IMR-90 (cell line): ENCODE measurements at regions of chr1 and their contacts with region 1.

Region 1: DNA sequence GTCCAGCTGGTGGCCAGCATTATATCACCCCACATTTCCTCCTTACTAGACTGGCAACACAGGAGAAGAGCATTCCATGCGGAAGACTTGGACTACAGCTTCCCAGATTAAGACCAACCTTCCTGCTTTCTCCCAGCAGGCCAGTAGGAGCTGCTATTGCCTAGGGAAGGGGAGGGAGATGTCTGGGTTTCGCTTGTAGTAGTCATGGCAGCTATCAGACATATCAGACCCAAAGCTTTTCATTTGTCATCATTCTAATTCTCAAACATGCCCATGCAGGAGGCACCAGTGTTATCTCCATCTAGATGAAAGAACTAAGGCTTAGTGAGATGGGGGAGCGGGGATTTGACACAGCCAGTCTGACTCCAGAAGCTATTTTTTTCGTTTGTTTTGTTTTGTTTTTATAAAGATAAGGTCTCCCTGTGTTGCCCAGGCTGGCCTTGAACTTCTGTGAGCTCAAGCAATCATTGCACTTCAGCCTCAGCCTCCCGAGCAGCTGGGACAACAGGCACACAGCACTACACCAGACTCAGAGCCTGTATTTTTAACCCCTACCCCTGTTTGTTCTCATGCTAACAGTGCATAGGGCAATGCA is 4.5 kb downstream of the PLA2G2A start:
- DNase-seq: peak; percentile 72
- ATAC-seq: peak; percentile 92
- H3K4me3 ChIP-seq: no peak overlapping the region
- H3K27ac ChIP-seq: no peak overlapping the region
- H3K4me1 ChIP-seq: no peaks in the 10 kb centered on the region
- H3K27me3 ChIP-seq: peaks cover 27% of the 10 kb centered on the region
- CTCF ChIP-seq: peak; percentile 84
- POLR2A ChIP-seq: no peak
- RAD21 ChIP-seq: peak; percentile 88

Region 2: GRCh38 chr1:20194757-20195461 is 220.0 kb after region 1 on chr1:
- CTCF ChIA-PET with region 1: interaction called, 3 read pairs
- POLR2A ChIA-PET with region 1: no interaction called
- dilution Hi-C with region 1: no loop called
- in situ Hi-C with region 1: no loop called
- intact Hi-C with region 1: loop called (anchors 1 kb)
- DNase-seq: peak; percentile 36
- ATAC-seq: peak; percentile 75
- H3K4me3 ChIP-seq: no peak overlapping the region
- H3K27ac ChIP-seq: no peak overlapping the region
- H3K4me1 ChIP-seq: no peaks in the 10 kb centered on the region
- H3K27me3 ChIP-seq: peaks cover 35% of the 10 kb centered on the region
- CTCF ChIP-seq: peak; percentile 59
- POLR2A ChIP-seq: no peak
- RAD21 ChIP-seq: peak; percentile 48